ENCODE measurements at regions of chr1 and their contacts with region 1.

Region 1: GRCh38 chr1:117664314-117664713 is 58.5 kb downstream of the TENT5C start:
- DNase-seq: peak; percentile 76
- ATAC-seq: peak; percentile 85
- H3K4me3 Mint-ChIP-seq: no peak overlapping the region
- H3K27ac Mint-ChIP-seq: peak overlapping the region; percentile 84
- H3K4me1 Mint-ChIP-seq: peaks cover 66% of the 10 kb centered on the region
- H3K27me3 Mint-ChIP-seq: peaks cover 5% of the 10 kb centered on the region

Region 2: DNA sequence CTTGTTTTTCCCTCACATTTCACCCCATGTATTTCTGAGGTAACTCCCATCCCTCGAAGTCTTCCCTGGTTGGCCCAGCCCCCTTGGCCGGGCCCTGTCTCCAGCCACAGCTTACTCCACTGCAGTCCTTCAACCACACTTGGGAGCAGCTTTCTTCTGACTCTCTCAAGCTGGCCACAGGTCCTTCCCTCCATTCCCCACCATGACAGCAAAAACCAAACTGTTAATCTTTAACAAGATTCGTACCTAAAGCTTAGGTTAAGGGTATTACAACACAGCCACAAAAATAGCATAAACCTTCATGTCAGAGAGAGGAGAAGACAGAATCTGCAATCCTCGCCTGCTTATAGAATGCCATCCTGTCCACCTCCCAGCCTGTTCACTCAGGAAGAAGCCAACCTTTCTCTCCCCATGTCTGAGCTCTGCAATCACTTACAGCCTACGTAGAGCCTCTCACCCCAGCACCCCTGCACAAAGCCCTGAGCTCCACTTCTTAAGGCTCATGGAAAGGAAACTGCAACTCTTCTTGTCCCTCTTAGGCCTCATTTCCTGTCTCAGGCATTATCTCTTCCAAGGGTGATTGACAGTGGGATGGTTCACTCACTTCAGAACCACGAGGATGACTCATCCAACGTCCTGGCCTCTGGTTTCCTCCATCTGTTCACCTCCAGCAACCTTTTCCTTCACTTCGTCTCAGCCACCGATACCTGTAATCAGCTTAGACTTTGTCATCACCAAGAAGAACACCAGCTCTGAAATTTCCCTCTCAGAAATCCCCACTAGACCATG is 837.3 kb before region 1 on chr1:
- CTCF ChIA-PET with region 1: no interaction called
- POLR2A ChIA-PET with region 1: no interaction called
- intact Hi-C with region 1: loop called in 1 of 2 experiments (anchors 1 kb)
- DNase-seq: peak; percentile 87
- ATAC-seq: peak; percentile 90
- H3K4me3 Mint-ChIP-seq: peak overlapping the region; percentile 77
- H3K27ac Mint-ChIP-seq: peak overlapping the region; percentile 97
- H3K4me1 Mint-ChIP-seq: peaks cover 69% of the 10 kb centered on the region
- H3K27me3 Mint-ChIP-seq: no peaks in the 10 kb centered on the region

Region 3: GRCh38 chr1:117367047-117368018 is 297.0 kb before region 1 on chr1 and contains the start of gene MAN1A2:
- CTCF ChIA-PET with region 1: no interaction called
- POLR2A ChIA-PET with region 1: no interaction called
- intact Hi-C with region 1: loop called in 1 of 2 experiments (anchors 5 kb)
- DNase-seq: peak; percentile 82
- ATAC-seq: peak; percentile 60
- H3K4me3 Mint-ChIP-seq: peak within 1 kb of the TSS; percentile 85
- H3K27ac Mint-ChIP-seq: peak within 1 kb of the TSS; percentile 98
- H3K4me1 Mint-ChIP-seq: peaks cover 52% of the 10 kb centered on the region
- H3K27me3 Mint-ChIP-seq: no peaks in the 10 kb centered on the region
- total RNA-seq, gene MAN1A2: 18.5 to 20.4 TPM

Region 4: DNA sequence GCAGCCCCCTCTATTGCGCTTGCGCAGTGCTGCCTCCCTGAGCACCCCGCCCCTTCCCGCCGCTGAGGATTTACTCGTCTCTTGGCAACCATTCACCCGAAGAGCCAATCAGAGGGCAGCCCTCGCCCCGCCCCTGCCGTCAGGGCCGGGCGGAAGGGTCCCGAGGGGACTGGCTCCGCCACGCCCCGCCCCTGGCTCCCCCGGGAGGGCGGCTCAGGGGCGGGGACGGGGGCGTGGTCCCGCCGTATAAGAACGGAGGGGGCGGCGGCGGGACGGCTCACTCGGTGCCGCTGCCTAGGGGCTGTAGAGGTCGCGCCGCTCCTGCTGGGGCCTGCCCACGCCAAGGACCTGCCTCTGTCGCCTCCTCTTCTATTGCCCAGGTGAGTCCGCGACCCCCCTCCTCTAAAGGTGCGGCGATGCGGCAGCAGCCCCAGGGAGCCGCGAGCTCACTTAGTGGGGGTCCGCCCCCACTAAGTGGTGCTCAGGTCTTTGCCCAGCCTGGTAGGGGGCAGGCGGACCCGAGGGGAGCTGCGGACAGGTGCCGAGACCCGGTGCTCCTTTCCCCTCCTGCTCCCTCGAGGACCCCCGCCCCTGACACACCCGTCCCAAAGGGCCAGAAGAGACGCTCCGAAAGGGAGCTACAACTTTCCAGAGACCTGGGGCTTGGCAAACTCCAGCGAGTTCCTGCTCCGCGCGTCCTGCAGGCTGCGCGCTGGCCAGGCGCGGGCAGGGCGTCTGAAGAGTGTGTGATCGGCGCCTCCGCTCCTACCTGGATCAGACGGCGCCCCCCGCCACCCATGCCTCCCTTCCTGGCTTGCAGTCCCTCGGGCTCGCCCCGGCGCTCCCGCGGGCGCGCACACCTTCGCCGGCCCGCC is 58.3 kb before region 1 on chr1 and contains the start of gene TENT5C:
- CTCF ChIA-PET with region 1: no interaction called
- POLR2A ChIA-PET with region 1: interaction called, 6 read pairs
- intact Hi-C with region 1: loop called (anchors 1 kb)
- DNase-seq: peak; percentile 98
- ATAC-seq: peak; percentile 96
- H3K4me3 Mint-ChIP-seq: peak within 1 kb of the TSS; percentile 92
- H3K27ac Mint-ChIP-seq: peak within 1 kb of the TSS; percentile 86
- H3K4me1 Mint-ChIP-seq: peaks cover 37% of the 10 kb centered on the region
- H3K27me3 Mint-ChIP-seq: peaks cover 2% of the 10 kb centered on the region
- total RNA-seq, gene TENT5C: 6.0 to 6.4 TPM

Region 5: DNA sequence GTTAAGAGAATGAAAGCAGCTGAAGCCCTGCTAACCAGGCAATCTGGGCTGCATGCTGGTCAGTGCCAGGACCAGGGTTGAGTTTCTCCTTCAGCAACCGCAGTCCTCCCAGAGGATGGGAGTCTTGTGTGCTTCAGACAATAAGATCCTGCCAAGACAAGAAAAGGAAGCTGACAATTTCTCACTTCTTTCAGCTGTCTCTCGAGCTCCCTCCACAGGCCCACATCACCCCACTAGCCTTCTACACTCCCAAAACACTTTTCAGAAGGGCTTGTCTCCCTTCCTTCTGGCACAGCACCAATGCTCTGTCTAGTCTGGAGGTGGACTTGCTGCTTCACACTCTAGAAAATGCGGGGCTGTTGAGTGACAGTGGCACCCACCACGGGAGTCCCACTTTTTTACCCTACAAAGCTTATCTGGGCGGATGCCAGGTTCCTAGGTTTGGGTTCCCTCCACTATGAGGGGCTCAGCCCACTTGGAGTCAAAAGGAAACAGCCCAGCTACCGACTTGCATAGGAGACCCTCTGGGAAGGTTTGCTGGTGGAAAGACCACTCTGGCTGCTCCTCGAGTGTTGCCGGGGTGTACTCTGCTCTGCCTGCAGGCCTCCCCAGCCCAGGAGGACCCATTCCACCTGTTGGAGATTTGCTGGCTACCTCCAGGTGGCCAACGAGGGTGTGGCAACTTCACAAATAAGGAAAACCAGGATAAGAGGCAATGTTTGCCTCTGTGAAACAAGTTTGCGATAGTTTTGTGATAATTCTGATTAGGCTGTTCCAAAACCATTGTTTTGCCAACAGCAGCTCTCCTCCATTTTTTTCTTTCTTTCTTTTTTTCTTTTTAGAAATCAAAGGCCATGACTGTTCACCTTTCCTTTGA is 10.4 kb after region 1 on chr1:
- CTCF ChIA-PET with region 1: interaction called, 14 read pairs
- POLR2A ChIA-PET with region 1: no interaction called
- intact Hi-C with region 1: no loop called
- DNase-seq: peak; percentile 67
- ATAC-seq: peak; percentile 72
- H3K4me3 Mint-ChIP-seq: no peak overlapping the region
- H3K27ac Mint-ChIP-seq: no peak overlapping the region
- H3K4me1 Mint-ChIP-seq: peaks cover 16% of the 10 kb centered on the region
- H3K27me3 Mint-ChIP-seq: no peaks in the 10 kb centered on the region

Region 6: DNA sequence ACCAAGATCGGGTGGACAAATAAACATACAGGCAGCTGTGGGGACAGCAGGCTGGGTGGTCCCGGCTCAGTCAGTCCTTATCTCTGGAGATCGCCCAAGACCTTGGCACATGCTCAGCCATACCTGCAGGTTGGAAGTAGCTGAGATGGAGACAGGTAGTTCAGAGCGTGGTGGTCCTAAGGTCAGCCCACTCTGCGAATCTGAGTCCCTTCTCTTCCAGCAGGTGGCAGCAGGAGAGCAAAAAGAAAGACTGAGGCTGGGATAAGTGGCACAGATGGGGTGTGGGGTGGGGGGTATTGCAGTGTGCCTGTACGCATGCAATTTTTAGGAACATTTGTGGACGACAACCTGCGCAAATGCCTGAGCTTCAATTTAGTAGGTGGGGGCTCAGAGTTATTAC is 46.4 kb after region 1 on chr1:
- CTCF ChIA-PET with region 1: no interaction called
- POLR2A ChIA-PET with region 1: no interaction called
- intact Hi-C with region 1: no loop called
- DNase-seq: no peak
- ATAC-seq: no peak
- H3K4me3 Mint-ChIP-seq: no peak overlapping the region
- H3K27ac Mint-ChIP-seq: no peak overlapping the region
- H3K4me1 Mint-ChIP-seq: no peaks in the 10 kb centered on the region
- H3K27me3 Mint-ChIP-seq: peaks cover 13% of the 10 kb centered on the region

Region 7: GRCh38 chr1:117740496-117740895 is 76.2 kb after region 1 on chr1:
- CTCF ChIA-PET with region 1: no interaction called
- POLR2A ChIA-PET with region 1: no interaction called
- intact Hi-C with region 1: no loop called
- DNase-seq: no peak
- ATAC-seq: no peak
- H3K4me3 Mint-ChIP-seq: no peak overlapping the region
- H3K27ac Mint-ChIP-seq: no peak overlapping the region
- H3K4me1 Mint-ChIP-seq: peaks cover under 1% of the 10 kb centered on the region
- H3K27me3 Mint-ChIP-seq: no peaks in the 10 kb centered on the region

Measured in activated CD4-positive, alpha-beta T cell treated with anti-CD3 and anti-CD28 coated beads for 36 hours (primary cell).